Activated CD4-positive, alpha-beta memory T cell treated with anti-CD3 and anti-CD28 coated beads for 36 hours (primary cell): ENCODE measurements at regions of chr17 and their contacts with region 1.

Region 1: DNA sequence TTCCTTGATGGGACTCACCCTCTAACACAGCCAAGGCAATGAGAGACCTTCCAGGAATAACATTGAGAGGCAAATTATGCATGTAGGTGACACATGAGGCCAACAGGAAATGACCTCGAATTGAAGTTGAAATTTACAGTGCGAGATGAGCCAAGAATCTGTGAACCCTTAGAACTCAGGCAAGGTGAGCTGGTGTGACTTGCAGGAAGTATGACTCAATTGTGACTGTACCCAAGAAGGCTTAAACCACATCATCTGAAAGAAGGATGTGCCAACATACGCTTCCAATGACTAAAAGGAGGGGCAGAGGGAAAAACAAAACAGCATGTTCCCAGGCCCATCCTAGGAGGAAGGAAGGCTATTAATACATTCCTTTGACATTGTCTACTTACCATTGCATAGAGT is 44.8 kb downstream of the PITPNC1 start:
- DNase-seq: peak; percentile 71
- H3K4me3 Mint-ChIP-seq: peak overlapping the region; percentile 42
- H3K27ac Mint-ChIP-seq: peak overlapping the region; percentile 91
- H3K4me1 Mint-ChIP-seq: peaks cover 74% of the 10 kb centered on the region
- H3K27me3 Mint-ChIP-seq: no peaks in the 10 kb centered on the region

Region 2: GRCh38 chr17:67366193-67367157 is 55.4 kb before region 1 on chr17 and contains the start of gene PSMD12:
- CTCF ChIA-PET with region 1: no interaction called
- POLR2A ChIA-PET with region 1: interaction called, 4 read pairs
- intact Hi-C with region 1: loop called (anchors 2 kb)
- DNase-seq: peak; percentile 96
- H3K4me3 Mint-ChIP-seq: peak within 1 kb of the TSS; percentile 95
- H3K27ac Mint-ChIP-seq: peak within 1 kb of the TSS; percentile 98
- H3K4me1 Mint-ChIP-seq: peaks cover 45% of the 10 kb centered on the region
- H3K27me3 Mint-ChIP-seq: no peaks in the 10 kb centered on the region
- total RNA-seq, gene PSMD12: 94.0 to 98.6 TPM